CD4-positive, alpha-beta T cell (primary cell): ENCODE measurements at regions of chr16 and their contacts with region 1.

Region 1: DNA sequence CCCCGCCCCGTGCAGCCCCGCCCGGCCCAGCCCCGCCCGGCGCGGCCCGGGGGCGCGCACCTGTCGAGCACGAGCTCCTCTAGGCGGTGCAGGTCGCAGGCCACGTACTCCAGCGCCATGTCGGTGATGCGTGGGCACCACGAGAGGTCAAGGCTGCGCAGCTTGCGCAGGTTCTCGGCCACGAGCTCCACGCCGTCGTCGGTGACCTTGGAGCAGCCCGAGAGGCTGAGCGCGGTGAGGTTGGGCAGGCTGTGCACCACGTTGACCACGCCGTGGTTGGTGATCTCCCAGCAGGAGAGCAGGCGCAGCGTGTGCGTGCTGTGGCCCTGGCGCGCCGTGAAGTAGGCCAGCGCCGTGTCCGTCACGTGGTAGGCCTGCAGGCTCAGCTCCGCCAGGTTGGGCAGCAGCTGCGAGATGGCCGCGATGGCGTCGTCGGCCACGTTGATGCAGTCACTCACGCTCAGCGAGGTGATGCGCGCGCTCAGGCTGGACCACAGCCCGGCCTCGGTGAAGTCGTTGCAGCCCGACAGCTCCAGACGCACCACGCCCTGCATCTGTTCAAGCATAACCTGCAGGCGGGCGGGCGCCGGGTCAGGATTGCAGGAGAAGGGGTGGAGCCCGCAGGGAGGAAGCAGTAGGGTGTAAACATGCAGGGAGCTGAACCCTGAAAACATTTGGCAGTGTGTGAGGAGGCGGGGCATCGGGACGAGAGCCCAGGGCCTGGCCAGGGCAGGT is 5.3 kb upstream of the WDR24 start:
- DNase-seq: peak; percentile 40 to 86 (median 73)
- ATAC-seq: peak; percentile 73
- H3K4me3 ChIP-seq: peak overlapping the region; percentile 69
- H3K4me3 Mint-ChIP-seq: peak overlapping the region; percentile 80
- H3K27ac ChIP-seq: no peak overlapping the region
- H3K27ac Mint-ChIP-seq: peak overlapping the region; percentile 72
- H3K4me1 ChIP-seq: peaks cover 59% of the 10 kb centered on the region
- H3K4me1 Mint-ChIP-seq: peaks cover 11% of the 10 kb centered on the region
- H3K27me3 ChIP-seq: peaks cover 0 to 2% of the 10 kb centered on the region in 2 experiments
- H3K27me3 Mint-ChIP-seq: no peaks in the 10 kb centered on the region
- CTCF ChIP-seq: no peak

Region 2: DNA sequence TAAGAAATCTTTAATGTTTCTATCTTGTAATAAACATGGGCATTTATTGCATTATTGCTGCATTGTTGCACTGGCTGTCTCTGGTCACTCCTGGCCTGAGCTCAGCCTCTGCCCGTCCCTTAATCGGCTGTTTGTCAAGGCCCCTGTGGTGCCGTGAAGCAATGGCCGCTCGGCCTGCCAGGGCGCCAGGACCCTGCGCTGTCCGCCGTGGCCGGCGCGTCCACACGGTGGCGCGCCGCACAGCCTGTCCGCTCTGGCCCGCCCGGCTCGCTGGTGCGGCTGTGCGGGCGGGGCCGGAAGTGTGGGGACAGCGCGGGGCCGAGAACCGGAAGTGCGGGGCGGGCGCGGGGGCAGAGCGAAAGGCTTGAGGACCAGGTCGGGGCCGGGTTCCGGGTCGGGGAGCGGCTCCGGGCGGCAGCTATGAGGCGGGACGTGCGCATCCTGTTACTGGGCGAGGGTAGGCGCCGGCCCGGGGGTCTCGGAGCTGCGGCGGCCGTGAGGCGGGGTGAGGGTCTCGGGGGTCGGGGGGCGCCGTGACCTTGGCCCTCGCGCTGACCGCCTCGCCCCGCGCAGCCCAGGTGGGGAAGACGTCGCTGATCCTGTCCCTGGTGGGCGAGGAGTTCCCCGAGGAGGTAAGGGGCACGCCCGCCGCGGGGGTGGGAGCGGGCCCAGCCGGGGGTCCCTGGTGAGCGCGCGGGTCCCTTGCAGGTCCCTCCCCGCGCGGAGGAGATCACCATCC is 27.6 kb before region 1 on chr16 and contains the start of gene RHOT2:
- CTCF ChIA-PET with region 1: interaction called, 6 read pairs
- POLR2A ChIA-PET with region 1: interaction called, 17 read pairs
- intact Hi-C with region 1: no loop called
- DNase-seq: peak; percentile 80 to 96 (median 92)
- ATAC-seq: peak; percentile 92
- H3K4me3 ChIP-seq: peak within 1 kb of the TSS; percentile 63
- H3K4me3 Mint-ChIP-seq: peak within 1 kb of the TSS; percentile 83
- H3K27ac ChIP-seq: peak within 1 kb of the TSS; percentile 28 to 56
- H3K27ac Mint-ChIP-seq: peak within 1 kb of the TSS; percentile 75
- H3K4me1 ChIP-seq: peaks cover 30% of the 10 kb centered on the region
- H3K4me1 Mint-ChIP-seq: peaks cover 6% of the 10 kb centered on the region
- H3K27me3 ChIP-seq: no peaks in the 10 kb centered on the region
- H3K27me3 Mint-ChIP-seq: no peaks in the 10 kb centered on the region
- CTCF ChIP-seq: peak; percentile 67
- total RNA-seq, gene RHOT2: 202 to 209 TPM

Region 3: GRCh38 chr16:706189-707061 is 10.9 kb after region 1 on chr16:
- CTCF ChIA-PET with region 1: no interaction called
- POLR2A ChIA-PET with region 1: interaction called, 11 read pairs
- intact Hi-C with region 1: no loop called
- DNase-seq: no peak
- ATAC-seq: no peak
- H3K4me3 ChIP-seq: no peak overlapping the region
- H3K4me3 Mint-ChIP-seq: peak overlapping the region; percentile 45
- H3K27ac ChIP-seq: no peak overlapping the region
- H3K27ac Mint-ChIP-seq: no peak overlapping the region
- H3K4me1 ChIP-seq: peaks cover 32% of the 10 kb centered on the region
- H3K4me1 Mint-ChIP-seq: no peaks in the 10 kb centered on the region
- H3K27me3 ChIP-seq: peaks cover 85 to 88% of the 10 kb centered on the region in 2 experiments
- H3K27me3 Mint-ChIP-seq: peaks cover 63% of the 10 kb centered on the region
- CTCF ChIP-seq: no peak

Region 4: GRCh38 chr16:720990-721764 is 25.7 kb after region 1 on chr16 and contains the start of gene ANTKMT:
- CTCF ChIA-PET with region 1: no interaction called
- POLR2A ChIA-PET with region 1: interaction called, 22 read pairs
- intact Hi-C with region 1: no loop called
- DNase-seq: peak; percentile 31 to 89 (median 63)
- ATAC-seq: peak; percentile 75
- H3K4me3 ChIP-seq: peak within 1 kb of the TSS; percentile 63
- H3K4me3 Mint-ChIP-seq: peak within 1 kb of the TSS; percentile 87
- H3K27ac ChIP-seq: peak within 1 kb of the TSS in 1 of 2 donors; percentile 35
- H3K27ac Mint-ChIP-seq: peak within 1 kb of the TSS; percentile 68
- H3K4me1 ChIP-seq: peaks cover 47% of the 10 kb centered on the region
- H3K4me1 Mint-ChIP-seq: peaks cover 20% of the 10 kb centered on the region
- H3K27me3 ChIP-seq: peaks cover 2 to 7% of the 10 kb centered on the region in 2 experiments
- H3K27me3 Mint-ChIP-seq: no peaks in the 10 kb centered on the region
- CTCF ChIP-seq: no peak
- total RNA-seq, gene ANTKMT: 8.1 TPM

Region 5: GRCh38 chr16:788394-789126 is 93.0 kb after region 1 on chr16 and contains the start of gene CHTF18:
- CTCF ChIA-PET with region 1: no interaction called
- POLR2A ChIA-PET with region 1: interaction called, 11 read pairs
- intact Hi-C with region 1: no loop called
- DNase-seq: peak; percentile 87 to 98 (median 94)
- ATAC-seq: peak; percentile 96
- H3K4me3 ChIP-seq: peak within 1 kb of the TSS; percentile 87
- H3K4me3 Mint-ChIP-seq: peak within 1 kb of the TSS; percentile 89
- H3K27ac ChIP-seq: peak within 1 kb of the TSS in 1 of 2 donors; percentile 35
- H3K27ac Mint-ChIP-seq: peak within 1 kb of the TSS; percentile 9
- H3K4me1 ChIP-seq: peaks cover 34% of the 10 kb centered on the region
- H3K4me1 Mint-ChIP-seq: no peaks in the 10 kb centered on the region
- H3K27me3 ChIP-seq: no peaks in the 10 kb centered on the region
- H3K27me3 Mint-ChIP-seq: no peaks in the 10 kb centered on the region
- CTCF ChIP-seq: no peak
- total RNA-seq, gene CHTF18: 30.7 to 31.1 TPM

Region 6: GRCh38 chr16:1964506-1965395 is 1269.2 kb after region 1 on chr16 and contains the start of gene RPS2:
- CTCF ChIA-PET with region 1: no interaction called
- POLR2A ChIA-PET with region 1: interaction called, 4 read pairs
- intact Hi-C with region 1: loop called in 1 of 2 experiments (anchors 10 kb)
- DNase-seq: peak; percentile 96 to 100 (median 98)
- ATAC-seq: peak; percentile 89
- H3K4me3 ChIP-seq: peak within 1 kb of the TSS; percentile 91
- H3K4me3 Mint-ChIP-seq: peak within 1 kb of the TSS; percentile 98
- H3K27ac ChIP-seq: peak within 1 kb of the TSS; percentile 96 to 99
- H3K27ac Mint-ChIP-seq: peak within 1 kb of the TSS; percentile 98
- H3K4me1 ChIP-seq: peaks cover 58% of the 10 kb centered on the region
- H3K4me1 Mint-ChIP-seq: peaks cover 50% of the 10 kb centered on the region
- H3K27me3 ChIP-seq: no peaks in the 10 kb centered on the region
- H3K27me3 Mint-ChIP-seq: no peaks in the 10 kb centered on the region
- CTCF ChIP-seq: no peak
- total RNA-seq, gene RPS2: 3,604 to 3,755 TPM